GM10248 (cell line): ENCODE measurements at regions of chr6 and their contacts with region 1.

Region 1: GRCh38 chr6:16514249-16514648 is 247.0 kb downstream of the ATXN1 start:
- DNase-seq: peak; percentile 42
- CTCF ChIP-seq: peak; percentile 55

Region 2: GRCh38 chr6:15969236-15969778 is 544.9 kb before region 1 on chr6:
- CTCF ChIA-PET with region 1: no interaction called
- POLR2A ChIA-PET with region 1: no interaction called
- DNase-seq: no peak
- CTCF ChIP-seq: no peak

Region 3: DNA sequence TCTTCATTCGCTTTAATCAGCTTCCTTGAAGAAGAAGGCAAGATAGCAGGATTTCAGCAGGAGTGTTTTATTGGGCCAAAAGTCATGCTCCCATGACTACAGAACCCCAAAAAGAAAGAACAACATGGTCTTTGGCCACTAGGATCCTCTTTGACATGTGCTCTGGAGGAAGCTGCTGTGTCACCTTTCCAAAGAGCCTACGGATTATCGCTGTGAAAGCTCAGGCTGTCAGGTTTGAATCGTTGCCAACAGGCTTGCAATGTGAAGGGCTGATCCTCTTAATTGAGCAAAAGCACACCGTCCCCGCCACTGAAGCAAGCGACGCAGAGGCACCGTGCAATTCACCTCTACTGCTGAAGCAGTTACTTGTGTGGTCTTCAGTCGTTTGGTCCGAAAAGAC is 356.3 kb before region 1 on chr6:
- CTCF ChIA-PET with region 1: no interaction called
- POLR2A ChIA-PET with region 1: no interaction called
- DNase-seq: no peak
- CTCF ChIP-seq: no peak

Region 4: GRCh38 chr6:16316741-16317251 is 197.5 kb before region 1 on chr6:
- CTCF ChIA-PET with region 1: no interaction called
- POLR2A ChIA-PET with region 1: no interaction called
- DNase-seq: peak; percentile 53
- CTCF ChIP-seq: peak; percentile 53

Region 5: GRCh38 chr6:16420715-16421461 is 93.4 kb before region 1 on chr6:
- CTCF ChIA-PET with region 1: interaction called, 20 read pairs
- POLR2A ChIA-PET with region 1: no interaction called
- DNase-seq: peak; percentile 64
- CTCF ChIP-seq: no peak

Region 6: GRCh38 chr6:16473184-16473907 is 40.9 kb before region 1 on chr6:
- CTCF ChIA-PET with region 1: interaction called, 10 read pairs
- POLR2A ChIA-PET with region 1: no interaction called
- DNase-seq: no peak
- CTCF ChIP-seq: no peak

Region 7: GRCh38 chr6:16494793-16495192 is 19.5 kb before region 1 on chr6:
- CTCF ChIA-PET with region 1: interaction called, 106 read pairs
- POLR2A ChIA-PET with region 1: no interaction called
- DNase-seq: peak; percentile 53
- CTCF ChIP-seq: no peak

Region 8: GRCh38 chr6:16503970-16504415 is 10.3 kb before region 1 on chr6:
- CTCF ChIA-PET with region 1: interaction called, 61 read pairs
- POLR2A ChIA-PET with region 1: no interaction called
- DNase-seq: no peak
- CTCF ChIP-seq: no peak

Region 9: GRCh38 chr6:16540804-16541752 is 26.8 kb after region 1 on chr6:
- CTCF ChIA-PET with region 1: interaction called, 14 read pairs
- POLR2A ChIA-PET with region 1: interaction called, 3 read pairs
- DNase-seq: peak; percentile 45
- CTCF ChIP-seq: no peak

Region 10: DNA sequence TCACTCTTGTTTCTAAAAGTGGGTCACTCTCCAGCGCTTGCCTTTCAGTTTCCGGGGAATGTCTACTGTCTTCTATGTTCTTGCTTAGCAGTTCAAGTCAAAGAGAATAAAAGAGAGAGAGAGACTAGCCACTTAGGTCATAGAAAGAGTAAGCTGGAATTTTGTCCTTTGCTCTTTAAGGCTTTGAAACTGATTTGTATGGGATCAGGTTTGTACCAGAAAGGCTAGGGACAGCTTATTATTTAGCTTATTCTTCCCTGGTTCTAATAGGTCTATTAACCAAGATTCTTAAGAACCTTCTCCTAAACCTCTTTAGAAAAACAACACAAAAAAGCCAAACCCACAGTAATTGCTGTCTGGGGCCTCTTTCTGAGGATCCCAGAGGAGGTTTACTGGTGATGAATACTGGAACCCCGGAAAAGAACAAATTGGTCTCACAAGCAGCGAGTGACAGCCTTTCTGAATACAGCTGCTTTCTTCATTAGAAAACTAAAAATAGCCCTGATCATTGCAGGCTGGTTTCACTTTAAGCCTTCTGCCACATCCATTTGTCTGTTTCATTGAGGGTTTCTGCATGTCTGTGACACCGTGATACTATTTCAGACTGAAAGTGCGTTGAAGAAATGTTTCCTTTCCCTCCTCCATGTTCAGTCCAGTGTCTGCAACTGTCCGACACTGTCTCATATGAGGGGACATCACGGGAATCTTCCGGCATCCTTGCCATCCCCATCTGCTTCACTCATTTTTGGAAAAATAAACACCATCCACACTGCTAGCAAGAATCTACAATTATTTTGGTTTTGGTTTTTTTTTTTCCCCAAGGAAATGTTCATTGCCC is 322.1 kb after region 1 on chr6:
- CTCF ChIA-PET with region 1: no interaction called
- POLR2A ChIA-PET with region 1: no interaction called
- DNase-seq: peak; percentile 56
- CTCF ChIP-seq: no peak